Ovary (tissue), 10 donors: ENCODE measurements at regions of chr17 and their contacts with region 1.

Region 1: DNA sequence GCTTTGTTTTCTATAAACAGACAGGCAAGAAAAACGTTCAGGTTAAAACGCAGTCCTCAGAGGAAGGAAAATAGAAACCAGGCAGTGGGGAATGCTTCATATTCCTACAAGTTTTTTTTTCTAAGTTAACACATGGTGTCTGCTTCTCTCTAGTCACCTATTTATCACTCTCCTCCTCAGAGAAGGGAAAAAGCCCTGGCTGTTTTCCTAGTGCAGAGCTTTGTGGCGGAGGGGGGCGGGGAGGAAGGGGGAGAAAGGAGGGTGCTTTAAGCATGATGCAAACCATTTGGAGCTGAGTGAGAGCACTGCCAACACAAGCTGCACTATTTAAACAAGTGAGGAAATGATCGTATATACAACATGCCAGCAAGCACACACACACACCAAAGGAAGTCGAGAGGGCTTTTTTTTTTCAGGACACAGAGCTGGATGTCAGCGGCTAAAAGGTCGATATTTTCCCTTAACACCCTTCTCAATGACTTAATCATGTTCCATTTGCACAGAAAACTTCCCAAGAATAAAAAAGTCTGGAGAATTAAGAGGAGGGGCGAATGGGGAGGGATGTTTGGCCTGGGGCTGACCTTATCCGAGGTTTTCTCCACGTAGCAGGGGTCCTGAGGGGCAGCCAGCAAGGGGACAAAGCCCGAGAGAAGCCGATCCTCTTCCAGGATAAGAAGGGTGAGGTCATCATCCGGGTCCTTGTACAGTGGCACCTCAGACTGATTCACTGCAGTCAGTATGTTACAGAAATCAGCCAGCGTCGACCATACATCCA is 117.4 kb downstream of the HIC1 start:
- DNase-seq: peak; percentile 85 to 91 (median 87)
- H3K4me3 ChIP-seq: no peak overlapping the region
- H3K27ac ChIP-seq: peak overlapping the region; percentile 16 to 85
- H3K4me1 ChIP-seq: peaks cover 35% of the 10 kb centered on the region
- H3K27me3 ChIP-seq: no peaks in the 10 kb centered on the region
- CTCF ChIP-seq: no peak
- EP300 ChIP-seq: no peak
- POLR2A ChIP-seq: no peak

Region 2: GRCh38 chr17:2122641-2123302 is 49.5 kb before region 1 on chr17:
- intact Hi-C with region 1: loop called in 2 of 4 experiments (anchors 5 to 10 kb)
- DNase-seq: peak; percentile 53 to 65 (median 59)
- H3K4me3 ChIP-seq: no peak overlapping the region
- H3K27ac ChIP-seq: peak overlapping the region; percentile 24 to 41
- H3K4me1 ChIP-seq: peaks cover 13% of the 10 kb centered on the region
- H3K27me3 ChIP-seq: no peaks in the 10 kb centered on the region
- CTCF ChIP-seq: no peak
- EP300 ChIP-seq: no peak
- POLR2A ChIP-seq: no peak

Region 3: DNA sequence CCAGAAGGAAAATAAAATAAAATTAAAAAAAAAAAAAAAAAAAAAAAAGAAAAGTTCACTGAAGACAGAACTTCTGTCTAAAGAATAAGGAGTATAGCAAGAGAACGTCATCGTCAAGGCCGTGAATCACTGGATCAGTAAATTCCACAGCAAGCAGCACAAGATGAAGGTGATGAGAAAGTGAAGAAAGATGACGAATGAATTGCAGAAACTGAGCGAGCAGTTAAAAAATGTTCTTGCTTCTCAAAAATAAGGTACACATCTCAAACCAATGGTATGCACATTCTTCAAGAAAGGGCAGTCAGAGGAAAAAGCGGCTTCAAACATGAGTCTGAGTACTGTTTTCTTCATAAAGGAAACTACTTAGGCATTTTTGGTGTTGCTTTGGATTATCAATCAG is 26.7 kb after region 1 on chr17:
- intact Hi-C with region 1: no loop called
- DNase-seq: no peak
- H3K4me3 ChIP-seq: no peak overlapping the region
- H3K27ac ChIP-seq: no peak overlapping the region
- H3K4me1 ChIP-seq: peaks cover 9% of the 10 kb centered on the region
- H3K27me3 ChIP-seq: no peaks in the 10 kb centered on the region
- CTCF ChIP-seq: no peak
- EP300 ChIP-seq: no peak
- POLR2A ChIP-seq: no peak

Region 4: GRCh38 chr17:2230877-2231276 is 58.6 kb after region 1 on chr17:
- intact Hi-C with region 1: loop called in 3 of 4 experiments (anchors 2 to 10 kb)
- DNase-seq: no peak
- H3K4me3 ChIP-seq: peak overlapping the region; percentile 12
- H3K27ac ChIP-seq: peak overlapping the region in 1 of 2 donors; percentile 17
- H3K4me1 ChIP-seq: peaks cover 15% of the 10 kb centered on the region
- H3K27me3 ChIP-seq: no peaks in the 10 kb centered on the region
- CTCF ChIP-seq: no peak
- EP300 ChIP-seq: no peak
- POLR2A ChIP-seq: no peak